ENCODE measurements at regions of chr9 and their contacts with region 1.

Region 1: DNA sequence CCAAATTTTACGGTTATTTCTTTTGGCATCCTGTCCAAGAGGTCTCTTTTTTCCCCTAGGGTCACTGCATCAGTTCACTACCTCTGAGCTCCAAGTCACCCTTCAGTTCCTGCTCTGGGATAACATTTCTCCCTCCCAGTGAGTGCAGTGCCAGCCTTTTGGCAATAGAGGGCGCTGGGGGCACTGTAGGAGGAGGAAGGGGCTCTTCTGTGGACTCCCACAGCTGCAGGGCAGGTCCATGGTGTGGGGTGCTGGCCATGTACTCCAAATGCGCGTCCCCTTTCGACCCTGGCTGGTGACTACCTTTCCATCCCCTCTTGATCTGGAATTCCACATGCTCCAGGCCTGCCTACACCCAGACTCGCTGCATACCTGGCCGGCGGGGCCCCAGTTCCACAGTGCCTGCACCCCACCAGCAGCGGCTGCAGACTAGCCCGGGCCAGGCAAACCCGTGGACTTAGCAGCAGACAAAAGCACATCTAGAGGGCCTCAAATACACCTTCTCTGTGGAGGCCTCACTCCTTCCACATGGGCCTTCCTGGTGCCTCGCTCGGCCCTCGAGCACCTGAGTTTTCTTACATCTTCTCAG is 20.4 kb upstream of the NINJ1 start:
- DNase-seq: peak; percentile 52
- ATAC-seq: no peak
- H3K4me3 Mint-ChIP-seq: no peak overlapping the region
- H3K27ac Mint-ChIP-seq: no peak overlapping the region
- H3K4me1 Mint-ChIP-seq: peaks cover 13% of the 10 kb centered on the region
- H3K27me3 Mint-ChIP-seq: no peaks in the 10 kb centered on the region

Region 2: DNA sequence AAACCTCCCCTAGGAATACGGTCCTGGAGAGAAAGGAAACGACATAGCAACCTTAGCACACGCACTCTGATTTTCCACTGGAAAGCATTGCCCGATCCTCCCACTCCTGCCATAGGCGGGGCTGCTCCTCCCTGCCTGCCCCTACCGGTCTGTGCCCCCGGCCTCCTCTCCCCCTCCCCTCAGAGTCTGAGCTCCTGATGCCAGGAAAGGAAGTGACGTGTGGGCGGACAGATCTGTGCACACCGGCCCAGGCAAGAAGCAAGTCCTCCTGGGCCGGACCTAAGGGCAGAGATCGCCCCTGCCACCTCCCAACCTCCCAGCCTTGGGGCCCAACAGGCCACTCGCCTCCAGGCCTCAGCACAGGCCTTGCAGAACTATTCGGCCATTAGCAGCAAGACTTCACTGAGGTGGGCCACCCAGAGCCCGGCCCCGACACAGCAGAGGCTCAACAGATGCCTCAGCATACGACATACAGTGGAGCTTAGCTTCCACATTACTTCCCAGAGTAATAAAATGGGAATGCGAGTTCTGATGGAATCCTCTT is 27.5 kb before region 1 on chr9:
- CTCF ChIA-PET with region 1: interaction called, 10 read pairs
- POLR2A ChIA-PET with region 1: no interaction called
- DNase-seq: no peak
- ATAC-seq: peak; percentile 11
- H3K4me3 Mint-ChIP-seq: no peak overlapping the region
- H3K27ac Mint-ChIP-seq: peak overlapping the region; percentile 94
- H3K4me1 Mint-ChIP-seq: peaks cover 55% of the 10 kb centered on the region
- H3K27me3 Mint-ChIP-seq: no peaks in the 10 kb centered on the region

Measured in activated CD8-positive, alpha-beta T cell treated with anti-CD3 and anti-CD28 coated beads, Interleukin-2, amount 10 ng/mL, durations not matched to agents 7 days and 5 days (primary cell).